ENCODE measurements at regions of chr10 and their contacts with region 1.

Region 1: GRCh38 chr10:48782386-48782785 is 97.7 kb downstream of the WDFY4 start:
- DNase-seq: no peak
- ATAC-seq: peak; percentile 68

Region 2: GRCh38 chr10:48838834-48839233 is 56.4 kb after region 1 on chr10:
- intact Hi-C with region 1: loop called (anchors 10 kb)
- DNase-seq: no peak
- ATAC-seq: no peak

Region 3: GRCh38 chr10:48885383-48885782 is 103.0 kb after region 1 on chr10:
- intact Hi-C with region 1: no loop called
- DNase-seq: no peak
- ATAC-seq: no peak